Posterior cingulate gyrus (tissue), 11 donors: ENCODE measurements at regions of chr19 and their contacts with region 1.

Region 1: GRCh38 chr19:41310033-41310758 is at the start of gene CCDC97:
- DNase-seq: peak; percentile 79 to 98 (median 84)

Region 2: GRCh38 chr19:41156207-41156606 is 154.0 kb before region 1 on chr19:
- intact Hi-C with region 1: no loop called
- DNase-seq: no peak

Region 3: GRCh38 chr19:41206926-41207750 is 103.1 kb before region 1 on chr19:
- intact Hi-C with region 1: loop called (anchors 2 kb)
- DNase-seq: no peak

Region 4: GRCh38 chr19:41263850-41264580 is 46.2 kb before region 1 on chr19 and contains the start of gene HNRNPUL1:
- intact Hi-C with region 1: loop called (anchors 2 kb)
- DNase-seq: peak; percentile 97 to 100 (median 98)

Region 5: GRCh38 chr19:41363753-41364523 is 53.7 kb after region 1 on chr19 and contains the start of gene B9D2:
- intact Hi-C with region 1: loop called (anchors 10 kb)
- DNase-seq: peak; percentile 95 to 99 (median 97)

Region 6: DNA sequence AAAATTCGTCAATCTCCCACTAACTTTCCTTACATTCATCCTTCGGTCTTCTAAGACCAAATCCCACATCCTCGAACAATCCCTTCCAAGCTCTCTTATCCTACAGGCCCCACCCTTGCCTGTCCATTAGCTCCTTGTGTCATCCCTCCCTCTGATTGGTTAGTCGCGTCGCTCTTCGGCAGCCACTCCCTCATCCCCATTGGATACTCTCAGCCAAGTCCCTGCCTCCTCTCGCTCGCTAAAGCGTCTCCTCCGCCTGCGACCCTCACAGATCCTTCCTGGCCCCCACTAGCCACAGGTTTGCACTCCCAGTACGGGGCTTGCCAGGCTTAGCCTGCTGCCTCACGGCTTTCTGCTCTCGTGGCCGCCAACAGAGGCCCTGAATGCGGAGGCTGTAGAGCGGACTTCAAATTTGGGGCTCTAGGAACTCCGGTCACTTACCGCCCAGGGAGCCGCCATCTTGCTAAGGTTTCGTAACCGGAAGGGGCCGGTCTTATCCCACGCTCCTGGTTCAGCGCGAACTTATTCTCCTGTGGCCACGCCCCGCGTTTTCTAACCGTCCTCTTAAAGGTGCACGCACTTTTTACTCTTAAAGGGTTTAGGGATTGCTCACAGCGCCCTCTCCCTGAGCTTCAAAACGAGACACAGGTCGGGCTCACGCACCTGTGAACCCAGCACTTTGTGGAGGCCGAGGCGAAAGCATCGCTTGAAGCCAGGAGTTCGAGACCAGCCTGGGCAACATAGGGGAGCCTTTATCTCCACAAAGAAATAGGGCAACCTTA is 129.4 kb after region 1 on chr19 and contains the start of gene DMAC2:
- intact Hi-C with region 1: loop called (anchors 1 kb)
- DNase-seq: peak; percentile 90 to 99 (median 96)